ENCODE measurements at regions of chr12 and their contacts with region 1.

Region 1: DNA sequence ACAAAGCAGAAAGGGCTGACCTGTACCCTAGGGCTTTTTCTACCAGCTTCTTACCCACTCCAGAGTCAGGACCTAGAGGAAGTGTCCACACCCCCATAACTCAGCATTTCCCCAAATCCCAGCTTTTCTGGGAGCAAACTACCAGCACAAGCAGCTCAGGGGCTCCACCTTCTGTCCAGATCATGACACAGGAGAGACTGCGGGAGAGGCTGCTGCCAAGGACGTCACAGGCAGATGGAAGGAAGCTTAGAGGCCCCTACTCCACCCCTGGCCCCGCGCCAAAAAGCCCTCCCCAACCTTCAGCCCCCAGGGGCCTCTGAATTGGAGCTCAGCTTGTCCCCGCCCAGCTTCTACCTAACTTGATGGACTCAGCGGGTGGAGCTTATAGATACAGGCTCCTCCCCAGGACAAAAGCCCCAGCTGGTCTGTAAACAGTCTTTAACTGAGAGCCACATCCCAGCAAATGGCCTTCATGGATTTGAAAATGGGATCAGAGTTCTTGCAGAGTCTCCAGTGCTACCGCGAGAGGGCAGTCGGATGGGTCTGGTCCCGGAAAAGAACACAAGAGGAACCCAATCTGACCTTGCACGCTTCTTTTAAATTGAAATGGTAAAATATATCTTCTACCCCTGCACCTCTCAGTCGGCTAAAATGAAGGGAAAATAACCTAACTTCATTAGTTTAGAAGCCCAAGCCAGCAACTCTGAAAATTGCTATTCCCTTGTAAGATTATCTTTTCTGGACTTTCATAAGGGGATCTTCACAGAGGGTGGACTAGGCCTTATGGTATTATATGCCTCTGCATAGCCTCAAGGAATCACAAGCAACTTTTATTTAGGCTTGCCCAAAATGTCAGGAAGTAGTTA is 6.8 kb upstream of the BAZ2A start:
- DNase-seq: peak; percentile 99
- H3K4me3 Mint-ChIP-seq: peak overlapping the region; percentile 95
- H3K27ac Mint-ChIP-seq: peak overlapping the region; percentile 87
- H3K4me1 Mint-ChIP-seq: peaks cover 48% of the 10 kb centered on the region
- H3K27me3 Mint-ChIP-seq: no peaks in the 10 kb centered on the region
- CTCF ChIP-seq: peak; percentile 64

Region 2: GRCh38 chr12:56521590-56522371 is 115.1 kb before region 1 on chr12 and contains the start of gene RBMS2:
- CTCF ChIA-PET with region 1: interaction called, 27 read pairs
- POLR2A ChIA-PET with region 1: interaction called, 83 read pairs
- intact Hi-C with region 1: no loop called
- DNase-seq: peak; percentile 94
- H3K4me3 Mint-ChIP-seq: peak within 1 kb of the TSS; percentile 74
- H3K27ac Mint-ChIP-seq: peak within 1 kb of the TSS; percentile 91
- H3K4me1 Mint-ChIP-seq: peaks cover 32% of the 10 kb centered on the region
- H3K27me3 Mint-ChIP-seq: no peaks in the 10 kb centered on the region
- CTCF ChIP-seq: no peak
- total RNA-seq, gene RBMS2: 34.9 and 62.7 TPM in 2 replicates

Region 3: GRCh38 chr12:56581418-56582145 is 55.3 kb before region 1 on chr12:
- CTCF ChIA-PET with region 1: interaction called, 10 read pairs
- POLR2A ChIA-PET with region 1: interaction called, 5 read pairs
- intact Hi-C with region 1: no loop called
- DNase-seq: peak; percentile 27
- H3K4me3 Mint-ChIP-seq: no peak overlapping the region
- H3K27ac Mint-ChIP-seq: peak overlapping the region; percentile 28
- H3K4me1 Mint-ChIP-seq: peaks cover 12% of the 10 kb centered on the region
- H3K27me3 Mint-ChIP-seq: no peaks in the 10 kb centered on the region
- CTCF ChIP-seq: no peak

Region 4: DNA sequence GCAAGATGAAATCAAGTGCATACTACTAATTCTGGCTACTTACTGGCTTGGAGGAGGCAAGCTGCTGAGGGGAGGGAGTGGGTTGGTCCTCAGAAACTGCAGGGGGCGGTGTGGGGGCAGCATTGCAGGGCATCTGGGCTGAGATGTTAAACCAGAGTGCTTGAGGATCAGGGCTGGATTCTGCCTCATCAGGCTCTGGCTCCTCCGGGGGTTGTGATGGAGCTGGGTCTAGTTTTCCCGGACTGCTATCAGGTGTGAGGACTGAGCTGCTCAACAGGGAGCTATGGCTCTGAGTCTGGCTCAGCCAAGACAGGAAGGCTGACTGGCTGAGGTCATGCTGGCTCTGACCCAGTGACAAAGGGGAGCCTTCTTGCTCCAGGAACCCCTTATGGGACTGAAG is 35.4 kb before region 1 on chr12:
- CTCF ChIA-PET with region 1: interaction called, 32 read pairs
- POLR2A ChIA-PET with region 1: interaction called, 5 read pairs
- intact Hi-C with region 1: no loop called
- DNase-seq: no peak
- H3K4me3 Mint-ChIP-seq: no peak overlapping the region
- H3K27ac Mint-ChIP-seq: peak overlapping the region; percentile 23
- H3K4me1 Mint-ChIP-seq: no peaks in the 10 kb centered on the region
- H3K27me3 Mint-ChIP-seq: no peaks in the 10 kb centered on the region
- CTCF ChIP-seq: no peak

Region 5: GRCh38 chr12:56670836-56671235 is 33.9 kb after region 1 on chr12:
- CTCF ChIA-PET with region 1: interaction called, 12 read pairs
- POLR2A ChIA-PET with region 1: interaction called, 4 read pairs
- intact Hi-C with region 1: no loop called
- DNase-seq: no peak
- H3K4me3 Mint-ChIP-seq: no peak overlapping the region
- H3K27ac Mint-ChIP-seq: no peak overlapping the region
- H3K4me1 Mint-ChIP-seq: peaks cover 6% of the 10 kb centered on the region
- H3K27me3 Mint-ChIP-seq: no peaks in the 10 kb centered on the region
- CTCF ChIP-seq: no peak

Region 6: GRCh38 chr12:56724972-56725722 is 88.2 kb after region 1 on chr12 and contains the start of gene NACA:
- CTCF ChIA-PET with region 1: interaction called, 6 read pairs
- POLR2A ChIA-PET with region 1: interaction called, 32 read pairs
- intact Hi-C with region 1: loop called (anchors 2 kb)
- DNase-seq: peak; percentile 97
- H3K4me3 Mint-ChIP-seq: peak within 1 kb of the TSS; percentile 91
- H3K27ac Mint-ChIP-seq: peak within 1 kb of the TSS; percentile 97
- H3K4me1 Mint-ChIP-seq: peaks cover 28% of the 10 kb centered on the region
- H3K27me3 Mint-ChIP-seq: no peaks in the 10 kb centered on the region
- CTCF ChIP-seq: no peak
- total RNA-seq, gene NACA: 1,274 and 1,490 TPM in 2 replicates

Measured in MCF 10A (cell line).